WTC11 (cell line): ENCODE measurements at regions of chr10 and their contacts with region 1.

Region 1: GRCh38 chr10:97869091-97870042 is 19.7 kb downstream of the GOLGA7B start:
- DNase-seq: peak; percentile 78
- ATAC-seq: peak; percentile 93
- H3K4me3 Mint-ChIP-seq: no peak overlapping the region
- H3K27ac Mint-ChIP-seq: no peak overlapping the region
- H3K4me1 Mint-ChIP-seq: peaks cover 28% of the 10 kb centered on the region
- H3K27me3 Mint-ChIP-seq: no peaks in the 10 kb centered on the region
- CTCF ChIP-seq: 0 out of 2 replicates have a peak, but pooled peaks have one; percentile 12

Region 2: GRCh38 chr10:97629289-97629688 is 240.1 kb before region 1 on chr10:
- CTCF ChIA-PET with region 1: no interaction called
- POLR2A ChIA-PET with region 1: no interaction called
- DNase-seq: no peak
- ATAC-seq: no peak
- H3K4me3 Mint-ChIP-seq: no peak overlapping the region
- H3K27ac Mint-ChIP-seq: no peak overlapping the region
- H3K4me1 Mint-ChIP-seq: peaks cover 11% of the 10 kb centered on the region; the same call in 1 of the 2 replicates
- H3K27me3 Mint-ChIP-seq: no peaks in the 10 kb centered on the region
- CTCF ChIP-seq: no peak

Region 3: DNA sequence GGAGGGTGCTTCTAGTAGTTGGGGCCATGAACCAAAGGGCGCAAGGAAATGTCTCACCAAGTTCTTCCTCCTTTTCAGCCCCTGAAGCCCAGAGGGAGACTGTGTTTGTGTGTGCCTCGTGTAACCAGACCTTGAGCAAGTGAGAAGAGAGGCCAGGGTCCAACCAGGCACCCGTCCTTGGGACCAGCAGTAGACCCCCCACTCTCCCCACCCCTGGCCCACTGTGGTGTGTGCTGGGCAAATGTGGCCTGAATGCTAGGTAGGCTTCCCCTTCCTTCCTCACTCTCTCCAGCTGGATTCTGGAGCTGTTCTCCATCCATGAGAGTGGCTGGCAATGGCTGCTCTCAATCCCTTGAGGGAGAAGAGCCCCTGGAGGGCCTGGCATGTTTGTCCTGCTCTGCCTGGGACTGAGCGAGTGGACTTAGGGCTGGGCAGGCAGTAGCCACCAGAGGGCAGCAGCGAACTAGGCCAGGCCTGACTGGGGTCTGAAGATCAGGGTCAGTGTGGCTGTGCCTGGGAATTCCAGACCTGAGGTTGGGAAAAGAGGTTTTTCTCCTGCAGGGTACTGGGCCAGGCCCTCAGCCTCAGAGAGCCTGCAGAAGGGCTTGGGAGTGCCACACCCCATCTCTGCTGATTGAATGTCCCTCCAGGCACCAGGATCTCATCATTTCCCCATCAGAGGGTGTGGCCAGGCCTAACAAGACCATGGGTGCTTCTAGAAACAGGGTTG is 110.0 kb before region 1 on chr10:
- CTCF ChIA-PET with region 1: interaction called, 10 read pairs
- POLR2A ChIA-PET with region 1: no interaction called
- DNase-seq: peak; percentile 90
- ATAC-seq: peak; percentile 90
- H3K4me3 Mint-ChIP-seq: no peak overlapping the region
- H3K27ac Mint-ChIP-seq: peak overlapping the region; percentile 53; the same call in 1 of the 2 replicates
- H3K4me1 Mint-ChIP-seq: peaks cover 14% of the 10 kb centered on the region
- H3K27me3 Mint-ChIP-seq: no peaks in the 10 kb centered on the region
- CTCF ChIP-seq: peak; percentile 76

Region 4: DNA sequence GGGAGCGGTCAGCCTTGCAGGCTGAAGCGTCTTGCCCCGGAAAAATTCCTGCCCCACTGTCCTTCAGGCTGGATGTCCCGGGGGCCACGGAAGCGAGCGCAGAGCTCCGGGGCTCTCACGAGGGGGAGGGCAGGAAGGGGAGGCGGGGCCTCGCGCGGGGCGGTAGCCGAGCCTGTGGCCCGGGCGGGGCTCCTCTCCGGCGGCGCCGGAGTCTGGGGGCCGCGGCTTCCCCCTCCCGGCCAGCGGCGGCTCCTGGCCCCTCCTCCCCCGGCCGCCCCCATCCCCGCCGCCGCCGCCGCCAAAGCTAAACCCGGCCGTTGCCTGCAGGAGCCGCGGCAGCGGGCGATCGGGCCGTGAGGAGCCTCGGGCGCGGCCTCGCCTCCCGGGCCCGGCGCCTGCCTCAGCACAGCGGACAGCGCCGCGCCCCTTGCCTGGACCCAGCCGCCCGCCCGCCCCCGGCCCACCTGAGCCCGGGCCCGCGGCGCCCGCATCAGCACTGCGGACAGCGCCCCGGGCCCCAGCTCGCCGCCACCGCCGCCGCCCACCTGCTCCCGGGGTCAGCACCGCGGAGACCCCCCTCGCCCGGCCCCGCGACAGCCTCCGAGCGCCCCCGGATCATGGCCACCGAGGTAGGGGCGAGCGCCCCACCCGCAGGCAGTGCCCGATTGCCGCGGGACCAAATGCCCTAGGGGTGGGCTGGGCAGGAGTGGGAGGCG is 19.5 kb before region 1 on chr10 and contains the start of gene GOLGA7B:
- CTCF ChIA-PET with region 1: interaction called, 22 read pairs
- POLR2A ChIA-PET with region 1: no interaction called
- DNase-seq: peak; percentile 75
- ATAC-seq: peak; percentile 95
- H3K4me3 Mint-ChIP-seq: peak within 1 kb of the TSS; percentile 73
- H3K27ac Mint-ChIP-seq: no peak within 1 kb of the TSS
- H3K4me1 Mint-ChIP-seq: peaks cover 14% of the 10 kb centered on the region
- H3K27me3 Mint-ChIP-seq: peaks cover 37% of the 10 kb centered on the region
- CTCF ChIP-seq: no peak
- total RNA-seq, gene GOLGA7B: 0.07 to 0.24 TPM (median 0.07 TPM) in 3 replicates

Region 5: GRCh38 chr10:97888641-97889262 is 19.4 kb after region 1 on chr10:
- CTCF ChIA-PET with region 1: interaction called, 13 read pairs
- POLR2A ChIA-PET with region 1: no interaction called
- DNase-seq: no peak
- ATAC-seq: peak; percentile 54
- H3K4me3 Mint-ChIP-seq: no peak overlapping the region
- H3K27ac Mint-ChIP-seq: no peak overlapping the region
- H3K4me1 Mint-ChIP-seq: peaks cover 35% of the 10 kb centered on the region
- H3K27me3 Mint-ChIP-seq: no peaks in the 10 kb centered on the region; the same call in 1 of the 2 replicates
- CTCF ChIP-seq: no peak